ENCODE measurements at regions of chr3 and their contacts with region 1.

Region 1: DNA sequence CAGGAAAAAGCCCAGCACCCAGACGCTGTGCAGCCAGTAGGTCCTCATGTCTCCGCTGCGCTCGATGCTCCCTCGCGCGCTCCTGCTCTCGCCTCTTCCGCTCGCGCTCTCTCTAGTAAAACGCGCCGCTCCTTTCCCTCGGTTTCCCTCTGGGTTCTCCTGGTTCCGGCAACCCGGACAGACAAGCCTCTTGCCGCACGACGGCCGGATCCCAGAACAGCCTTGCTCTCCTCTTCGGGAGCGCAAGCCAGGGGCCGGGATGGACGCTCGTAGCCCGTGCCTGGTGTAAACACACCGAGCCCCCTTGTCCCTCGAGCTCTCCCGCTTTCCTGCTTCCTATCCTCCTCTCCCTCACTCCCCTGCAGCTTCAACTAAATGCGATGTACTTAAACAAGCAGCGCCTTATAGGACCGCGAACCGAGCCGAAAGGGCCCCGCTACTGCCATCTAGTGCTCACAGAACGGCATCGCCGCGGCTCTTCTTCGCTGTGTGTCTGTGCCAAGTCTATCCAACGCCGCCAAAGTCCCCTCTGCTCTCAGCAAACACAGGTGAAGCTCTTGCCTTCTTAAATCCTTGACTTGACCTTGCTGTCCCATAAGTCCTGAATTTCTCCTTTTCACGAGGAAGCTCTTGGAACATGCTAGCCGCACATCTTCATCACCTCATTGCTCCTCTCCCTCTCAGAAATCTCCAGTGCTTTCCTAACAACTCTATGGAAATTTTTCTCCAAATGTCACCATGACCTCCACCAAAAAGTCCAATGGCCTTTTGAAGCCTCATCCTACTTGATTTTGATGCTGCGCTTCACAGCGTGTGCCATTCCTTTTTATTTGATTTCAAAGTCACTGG is 1037.2 kb downstream of the IGSF11 start:
- DNase-seq: peak; percentile 76
- H3K4me3 ChIP-seq: peak overlapping the region; percentile 75 to 85
- H3K27ac ChIP-seq: peak overlapping the region in 1 of 2 experiments; percentile 95; a peak in 2 of 4 replicates
- H3K4me1 ChIP-seq: peaks cover 0 to 7% of the 10 kb centered on the region in 2 experiments; a peak in 2 of 4 replicates
- H3K27me3 ChIP-seq: no peaks in the 10 kb centered on the region
- CTCF ChIP-seq: peak; percentile 92
- EP300 ChIP-seq: no peak
- RAD21 ChIP-seq: peak; percentile 90

Region 2: GRCh38 chr3:117873249-117873600 is 124.2 kb before region 1 on chr3:
- CTCF ChIA-PET with region 1: interaction called, 20 read pairs
- POLR2A ChIA-PET with region 1: interaction called, 4 read pairs
- DNase-seq: peak; percentile 44
- H3K4me3 ChIP-seq: no peak overlapping the region
- H3K27ac ChIP-seq: peak overlapping the region in 1 of 2 experiments; percentile 97; a peak in 2 of 4 replicates
- H3K4me1 ChIP-seq: peaks cover 0 to 20% of the 10 kb centered on the region in 2 experiments; a peak in 2 of 4 replicates
- H3K27me3 ChIP-seq: no peaks in the 10 kb centered on the region
- CTCF ChIP-seq: no peak
- EP300 ChIP-seq: peak in 1 of 2 experiments; percentile 52; a peak in 2 of 4 replicates
- RAD21 ChIP-seq: peak; percentile 29; the same call in 1 of the 2 replicates

Region 3: DNA sequence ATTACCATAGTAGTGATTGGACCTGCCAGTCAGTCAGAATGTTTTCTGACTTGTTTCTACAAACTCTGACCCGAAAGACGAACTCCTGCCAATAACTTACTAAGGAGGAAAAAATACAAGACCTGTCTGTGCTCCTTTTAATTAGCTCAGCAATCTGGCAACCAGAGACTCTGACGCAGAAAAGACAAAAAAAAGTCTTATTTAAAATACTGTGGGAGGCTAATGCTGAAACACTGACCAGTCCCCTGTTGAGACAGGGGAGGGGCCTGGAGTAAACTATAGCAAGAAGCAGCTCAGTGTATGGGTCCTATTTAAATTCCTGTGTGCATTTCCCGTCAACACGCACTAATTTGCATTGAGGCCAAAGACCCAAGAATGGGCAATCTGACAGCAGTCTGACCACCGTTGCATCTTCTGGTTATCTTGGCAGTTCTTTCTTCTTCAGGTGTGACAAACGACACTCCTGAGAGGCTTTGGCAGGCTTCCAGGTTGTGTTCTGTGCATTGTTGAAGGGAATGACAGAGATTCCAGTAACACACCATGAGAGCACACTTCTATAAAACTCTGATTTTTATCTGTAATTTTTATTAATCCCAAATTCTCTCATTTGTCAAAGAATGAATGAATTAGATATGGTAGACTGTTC is 77.0 kb before region 1 on chr3:
- CTCF ChIA-PET with region 1: interaction called, 21 read pairs
- POLR2A ChIA-PET with region 1: interaction called, 3 read pairs
- DNase-seq: no peak
- H3K4me3 ChIP-seq: no peak overlapping the region
- H3K27ac ChIP-seq: peak overlapping the region in 1 of 2 experiments; percentile 55; a peak in 2 of 4 replicates
- H3K4me1 ChIP-seq: peaks cover 0 to 33% of the 10 kb centered on the region in 2 experiments; a peak in 2 of 4 replicates
- H3K27me3 ChIP-seq: no peaks in the 10 kb centered on the region
- CTCF ChIP-seq: no peak
- EP300 ChIP-seq: peak in 1 of 2 experiments; percentile 21; a peak in 1 of 4 replicates
- RAD21 ChIP-seq: no peak

Region 4: GRCh38 chr3:117979466-117979865 is 18.0 kb before region 1 on chr3:
- CTCF ChIA-PET with region 1: interaction called, 10 read pairs
- POLR2A ChIA-PET with region 1: no interaction called
- DNase-seq: no peak
- H3K4me3 ChIP-seq: no peak overlapping the region
- H3K27ac ChIP-seq: no peak overlapping the region
- H3K4me1 ChIP-seq: peaks cover 0 to 13% of the 10 kb centered on the region in 2 experiments; a peak in 2 of 4 replicates
- H3K27me3 ChIP-seq: no peaks in the 10 kb centered on the region
- CTCF ChIP-seq: no peak
- EP300 ChIP-seq: no peak
- RAD21 ChIP-seq: no peak

Region 5: GRCh38 chr3:118067439-118067838 is 70.0 kb after region 1 on chr3:
- CTCF ChIA-PET with region 1: no interaction called
- POLR2A ChIA-PET with region 1: no interaction called
- DNase-seq: no peak
- H3K4me3 ChIP-seq: no peak overlapping the region
- H3K27ac ChIP-seq: no peak overlapping the region
- H3K4me1 ChIP-seq: no peaks in the 10 kb centered on the region
- H3K27me3 ChIP-seq: no peaks in the 10 kb centered on the region
- CTCF ChIP-seq: no peak
- EP300 ChIP-seq: no peak
- RAD21 ChIP-seq: no peak

Region 6: GRCh38 chr3:118628704-118629341 is 631.4 kb after region 1 on chr3:
- CTCF ChIA-PET with region 1: interaction called, 25 read pairs
- POLR2A ChIA-PET with region 1: interaction called, 3 read pairs
- DNase-seq: peak; percentile 66
- H3K4me3 ChIP-seq: no peak overlapping the region; a peak in 1 of 4 replicates
- H3K27ac ChIP-seq: no peak overlapping the region
- H3K4me1 ChIP-seq: peaks cover 0 to 4% of the 10 kb centered on the region in 2 experiments; a peak in 2 of 4 replicates
- H3K27me3 ChIP-seq: no peaks in the 10 kb centered on the region
- CTCF ChIP-seq: peak; percentile 77
- EP300 ChIP-seq: no peak
- RAD21 ChIP-seq: peak; percentile 99